BJ (cell line): ENCODE measurements at regions of chr11 and their contacts with region 1.

Region 1: DNA sequence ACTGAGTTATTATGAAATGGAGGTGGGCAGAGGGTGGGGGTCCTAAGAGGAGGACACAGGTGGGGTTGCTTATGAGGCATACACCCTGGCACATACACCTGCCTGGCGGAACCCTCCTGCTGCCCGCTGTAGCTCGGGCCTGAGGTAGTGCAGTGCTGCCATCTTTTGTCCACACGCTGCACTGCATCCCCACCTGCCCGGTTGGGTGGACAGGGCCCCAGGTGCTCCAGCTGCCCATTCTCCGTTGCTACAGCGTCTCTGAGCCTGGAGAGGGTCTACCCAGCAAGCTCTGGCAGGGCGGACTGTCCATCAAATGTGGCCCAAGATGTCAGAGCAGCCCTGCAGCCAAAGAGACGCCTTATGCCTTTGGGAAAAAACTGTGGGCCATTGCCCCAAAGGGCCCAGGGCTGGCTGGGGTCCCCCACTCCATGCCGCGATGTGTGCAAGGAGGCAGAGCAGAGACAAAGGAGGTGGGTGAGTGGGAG is 131.2 kb downstream of the BUD13 start:
- DNase-seq: no peak
- H3K4me3 ChIP-seq: no peak overlapping the region
- H3K27me3 ChIP-seq: no peaks in the 10 kb centered on the region
- CTCF ChIP-seq: peak; percentile 66

Region 2: GRCh38 chr11:116276051-116277044 is 365.3 kb before region 1 on chr11:
- CTCF ChIA-PET with region 1: no interaction called
- POLR2A ChIA-PET with region 1: no interaction called
- DNase-seq: no peak
- H3K4me3 ChIP-seq: no peak overlapping the region
- H3K27me3 ChIP-seq: no peaks in the 10 kb centered on the region
- CTCF ChIP-seq: peak; percentile 76

Region 3: GRCh38 chr11:116427903-116428637 is 213.5 kb before region 1 on chr11:
- CTCF ChIA-PET with region 1: no interaction called
- POLR2A ChIA-PET with region 1: no interaction called
- DNase-seq: no peak
- H3K4me3 ChIP-seq: no peak overlapping the region
- H3K27me3 ChIP-seq: no peaks in the 10 kb centered on the region
- CTCF ChIP-seq: no peak

Region 4: DNA sequence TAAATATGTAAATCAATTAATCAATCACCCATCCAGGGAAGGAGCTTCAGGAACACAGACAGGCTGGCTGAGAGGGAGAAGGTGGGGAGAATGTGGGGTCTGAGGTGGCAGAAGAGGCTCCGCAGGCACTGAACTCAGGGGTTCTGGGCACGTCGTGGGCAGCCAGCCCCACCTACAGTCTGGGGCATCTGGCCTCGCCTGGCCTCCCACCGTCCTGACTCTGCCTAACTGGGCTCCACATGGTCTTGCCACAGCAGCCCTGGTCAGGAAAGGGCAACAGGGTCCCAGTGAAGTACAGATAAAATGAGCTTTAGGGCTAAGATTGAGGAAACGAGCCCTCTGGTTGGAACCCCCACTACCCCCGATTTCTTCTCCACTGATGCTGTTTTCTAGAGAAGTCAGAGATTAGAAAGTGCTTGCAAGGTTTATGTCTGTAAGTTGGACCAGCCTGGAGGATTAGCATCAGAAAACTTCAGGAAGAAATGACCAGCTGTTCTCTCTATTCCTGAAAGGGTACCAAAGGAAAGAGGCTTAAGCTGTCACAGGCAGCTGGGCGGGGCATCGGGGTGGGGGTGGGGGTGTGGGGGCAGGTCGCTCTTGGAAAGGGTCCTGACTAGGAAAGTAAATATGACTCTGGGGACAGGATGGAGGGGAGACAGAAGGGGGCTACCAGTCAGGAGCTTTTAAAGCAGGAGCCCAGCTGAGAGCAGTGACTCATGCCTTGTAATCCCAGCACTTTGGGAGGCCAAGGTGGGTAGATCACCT is 130.5 kb before region 1 on chr11:
- CTCF ChIA-PET with region 1: interaction called, 11 read pairs
- POLR2A ChIA-PET with region 1: no interaction called
- DNase-seq: no peak
- H3K4me3 ChIP-seq: no peak overlapping the region
- H3K27me3 ChIP-seq: no peaks in the 10 kb centered on the region
- CTCF ChIP-seq: no peak

Region 5: DNA sequence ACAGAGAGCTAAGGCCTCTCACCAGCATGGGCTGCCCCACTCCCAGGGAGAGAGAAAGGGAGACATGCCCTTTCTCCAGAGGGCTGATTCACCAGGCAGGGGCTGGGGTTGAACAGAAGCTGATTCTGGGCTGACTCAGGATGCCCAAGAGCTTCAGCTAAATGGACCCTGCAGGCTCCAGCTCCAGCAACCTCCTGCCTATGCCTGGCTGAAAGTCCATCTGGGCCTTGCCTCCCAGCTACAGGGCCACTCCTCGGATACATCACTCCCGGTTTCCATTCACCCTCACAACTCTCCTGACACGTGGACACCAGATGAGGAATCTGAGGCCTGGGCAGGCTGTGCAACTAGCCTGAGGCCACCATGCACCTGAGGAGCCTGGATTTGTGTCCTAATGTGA is 84.3 kb before region 1 on chr11:
- CTCF ChIA-PET with region 1: no interaction called
- POLR2A ChIA-PET with region 1: no interaction called
- DNase-seq: no peak
- H3K4me3 ChIP-seq: no peak overlapping the region
- H3K27me3 ChIP-seq: no peaks in the 10 kb centered on the region
- CTCF ChIP-seq: no peak

Region 6: DNA sequence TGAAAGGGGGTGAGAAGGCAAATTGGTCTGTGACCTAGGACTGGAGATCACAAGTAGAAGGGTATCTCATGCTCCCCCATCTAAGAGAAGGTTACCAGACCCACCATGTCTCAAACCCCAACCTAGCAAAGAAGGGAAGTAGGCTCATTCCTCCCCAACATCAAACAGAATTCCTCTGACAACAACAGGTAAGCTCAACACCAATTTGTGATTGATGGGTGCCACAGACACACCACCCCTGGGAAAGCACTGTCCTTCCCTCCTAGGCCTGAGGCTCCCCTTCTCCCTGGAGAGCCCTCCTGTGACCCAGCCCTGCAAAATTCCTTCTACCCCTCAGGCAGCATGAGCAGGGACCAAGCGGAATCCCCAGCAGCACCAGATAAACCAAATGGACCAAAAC is 23.1 kb before region 1 on chr11:
- CTCF ChIA-PET with region 1: no interaction called
- POLR2A ChIA-PET with region 1: no interaction called
- DNase-seq: no peak
- H3K4me3 ChIP-seq: no peak overlapping the region
- H3K27me3 ChIP-seq: no peaks in the 10 kb centered on the region
- CTCF ChIP-seq: no peak